MCF 10A (cell line): ENCODE measurements at regions of chr2 and their contacts with region 1.

Region 1: GRCh38 chr2:174697255-174697654 is 67.0 kb downstream of the CHRNA1 start:
- DNase-seq: peak; percentile 69
- H3K4me3 Mint-ChIP-seq: no peak overlapping the region
- H3K27ac Mint-ChIP-seq: no peak overlapping the region
- H3K4me1 Mint-ChIP-seq: peaks cover 5% of the 10 kb centered on the region
- H3K27me3 Mint-ChIP-seq: no peaks in the 10 kb centered on the region
- CTCF ChIP-seq: peak; percentile 52

Region 2: DNA sequence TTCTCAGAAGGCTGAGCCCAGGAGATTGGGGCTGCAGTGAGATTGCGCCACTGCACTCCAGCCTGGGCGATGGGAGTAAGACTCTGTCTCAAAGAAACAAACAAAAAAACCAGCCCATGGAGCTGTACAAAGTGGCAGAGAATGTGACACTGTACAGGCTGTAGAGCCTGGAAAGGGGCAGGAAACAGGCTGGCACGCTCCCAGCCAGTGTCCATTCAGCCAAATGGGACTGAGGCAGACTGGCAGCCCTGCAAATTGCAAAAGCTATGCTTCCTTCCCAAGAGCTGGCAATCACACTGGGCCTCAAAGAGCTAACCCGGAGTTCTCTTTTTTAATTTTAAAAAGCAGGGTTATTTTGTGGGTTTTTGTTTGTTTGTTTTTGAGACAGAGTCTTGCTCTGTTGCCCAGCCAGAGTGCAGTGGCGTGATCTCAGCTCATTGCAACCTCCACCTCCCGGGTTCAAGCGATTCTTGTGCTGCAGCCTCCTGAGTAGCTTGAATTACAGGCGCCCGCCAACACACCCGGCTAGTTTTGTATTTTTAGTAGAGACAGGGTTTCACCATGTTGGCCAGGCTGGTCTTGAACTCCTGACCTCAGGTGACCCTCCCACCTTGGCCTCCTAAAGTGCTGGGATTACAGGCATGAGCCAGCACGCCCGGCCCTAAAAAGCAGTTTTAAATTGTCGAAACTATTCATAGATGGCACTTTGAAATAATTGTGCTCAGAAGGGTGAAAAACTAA is 258.9 kb before region 1 on chr2:
- CTCF ChIA-PET with region 1: no interaction called
- POLR2A ChIA-PET with region 1: no interaction called
- intact Hi-C with region 1: no loop called
- DNase-seq: no peak
- H3K4me3 Mint-ChIP-seq: no peak overlapping the region
- H3K27ac Mint-ChIP-seq: no peak overlapping the region
- H3K4me1 Mint-ChIP-seq: peaks cover 6% of the 10 kb centered on the region
- H3K27me3 Mint-ChIP-seq: no peaks in the 10 kb centered on the region
- CTCF ChIP-seq: no peak

Region 3: DNA sequence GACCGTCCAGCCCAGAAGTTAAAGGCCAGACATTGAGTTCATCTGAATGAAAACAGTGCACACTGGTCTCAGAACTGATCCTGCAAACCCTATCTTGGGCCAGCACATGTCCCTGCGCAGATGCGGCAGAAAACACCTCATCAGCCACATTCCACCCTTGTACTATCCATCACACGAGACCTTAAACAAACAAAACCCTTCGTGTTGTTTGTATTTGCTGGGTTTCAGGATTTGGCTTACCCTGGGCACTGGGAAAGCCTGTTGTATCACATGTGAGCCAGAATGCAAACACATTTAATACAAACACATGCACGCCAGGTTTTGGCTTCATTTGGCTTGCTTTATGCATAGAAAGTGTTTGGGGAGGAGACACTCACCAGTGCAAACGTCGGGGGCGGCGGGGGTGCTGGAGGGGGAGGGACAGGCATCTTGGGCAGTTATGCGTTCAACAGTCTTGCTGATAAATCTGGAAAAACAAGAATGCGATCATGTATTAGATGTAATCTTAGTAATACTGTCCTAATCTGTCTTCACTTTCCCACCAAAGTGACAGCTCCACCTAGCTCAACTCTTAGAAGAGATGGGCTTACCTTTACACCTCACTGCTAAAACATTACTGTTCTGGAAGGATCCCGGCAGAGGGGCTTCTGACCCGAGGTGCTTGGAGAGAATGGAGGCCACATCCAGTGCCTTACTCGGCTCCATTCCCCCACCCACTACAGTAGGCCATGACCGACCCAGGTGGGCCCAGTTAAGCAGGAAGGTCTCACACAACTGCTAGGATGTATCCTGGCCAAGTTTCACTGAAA is 111.9 kb before region 1 on chr2:
- CTCF ChIA-PET with region 1: interaction called, 20 read pairs
- POLR2A ChIA-PET with region 1: no interaction called
- intact Hi-C with region 1: no loop called
- DNase-seq: no peak
- H3K4me3 Mint-ChIP-seq: no peak overlapping the region
- H3K27ac Mint-ChIP-seq: no peak overlapping the region
- H3K4me1 Mint-ChIP-seq: no peaks in the 10 kb centered on the region
- H3K27me3 Mint-ChIP-seq: no peaks in the 10 kb centered on the region
- CTCF ChIP-seq: no peak

Region 4: DNA sequence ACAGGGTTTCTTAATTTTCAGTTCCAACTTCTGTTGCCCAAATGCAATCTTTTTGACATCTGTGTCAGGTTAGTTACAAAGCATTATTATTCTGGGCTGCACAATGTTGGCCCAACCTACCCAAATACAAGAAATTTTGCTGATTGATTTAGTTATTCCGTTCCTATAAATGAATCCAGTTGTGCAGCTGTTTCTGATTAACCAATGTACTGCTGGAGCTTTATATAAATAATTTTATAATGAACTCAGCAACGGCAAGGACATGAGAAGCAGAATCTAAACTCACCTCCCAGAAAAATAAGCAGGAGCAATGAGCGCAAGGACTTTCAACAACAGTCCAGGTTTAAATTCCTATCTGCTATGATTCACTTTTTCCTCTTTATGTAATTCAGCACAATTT is 23.4 kb before region 1 on chr2:
- CTCF ChIA-PET with region 1: interaction called, 11 read pairs
- POLR2A ChIA-PET with region 1: no interaction called
- intact Hi-C with region 1: no loop called
- DNase-seq: no peak
- H3K4me3 Mint-ChIP-seq: no peak overlapping the region
- H3K27ac Mint-ChIP-seq: no peak overlapping the region
- H3K4me1 Mint-ChIP-seq: peaks cover 6% of the 10 kb centered on the region
- H3K27me3 Mint-ChIP-seq: no peaks in the 10 kb centered on the region
- CTCF ChIP-seq: no peak

Region 5: DNA sequence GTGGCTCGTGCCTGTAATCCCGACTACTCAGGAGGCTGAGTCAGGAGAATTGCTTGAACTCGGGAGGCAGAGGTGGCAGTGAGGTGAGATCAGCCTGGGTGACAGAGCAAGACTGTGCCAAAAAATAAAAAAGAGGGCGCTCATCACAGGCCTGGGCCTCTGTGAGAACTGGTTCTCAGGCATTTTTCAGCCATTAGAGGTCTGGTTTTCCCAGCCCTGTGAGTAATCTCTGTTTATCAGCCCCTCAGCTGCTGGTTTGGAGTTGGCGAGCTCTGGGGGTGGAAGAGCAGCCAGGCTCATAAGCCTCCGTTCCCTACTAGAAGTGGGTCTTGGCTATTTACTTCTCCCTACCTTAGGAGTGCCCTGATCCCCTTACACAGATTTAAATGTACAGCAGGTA is 14.0 kb after region 1 on chr2:
- CTCF ChIA-PET with region 1: interaction called, 32 read pairs
- POLR2A ChIA-PET with region 1: no interaction called
- intact Hi-C with region 1: no loop called
- DNase-seq: no peak
- H3K4me3 Mint-ChIP-seq: no peak overlapping the region
- H3K27ac Mint-ChIP-seq: no peak overlapping the region
- H3K4me1 Mint-ChIP-seq: no peaks in the 10 kb centered on the region
- H3K27me3 Mint-ChIP-seq: peaks cover 11% of the 10 kb centered on the region
- CTCF ChIP-seq: no peak

Region 6: DNA sequence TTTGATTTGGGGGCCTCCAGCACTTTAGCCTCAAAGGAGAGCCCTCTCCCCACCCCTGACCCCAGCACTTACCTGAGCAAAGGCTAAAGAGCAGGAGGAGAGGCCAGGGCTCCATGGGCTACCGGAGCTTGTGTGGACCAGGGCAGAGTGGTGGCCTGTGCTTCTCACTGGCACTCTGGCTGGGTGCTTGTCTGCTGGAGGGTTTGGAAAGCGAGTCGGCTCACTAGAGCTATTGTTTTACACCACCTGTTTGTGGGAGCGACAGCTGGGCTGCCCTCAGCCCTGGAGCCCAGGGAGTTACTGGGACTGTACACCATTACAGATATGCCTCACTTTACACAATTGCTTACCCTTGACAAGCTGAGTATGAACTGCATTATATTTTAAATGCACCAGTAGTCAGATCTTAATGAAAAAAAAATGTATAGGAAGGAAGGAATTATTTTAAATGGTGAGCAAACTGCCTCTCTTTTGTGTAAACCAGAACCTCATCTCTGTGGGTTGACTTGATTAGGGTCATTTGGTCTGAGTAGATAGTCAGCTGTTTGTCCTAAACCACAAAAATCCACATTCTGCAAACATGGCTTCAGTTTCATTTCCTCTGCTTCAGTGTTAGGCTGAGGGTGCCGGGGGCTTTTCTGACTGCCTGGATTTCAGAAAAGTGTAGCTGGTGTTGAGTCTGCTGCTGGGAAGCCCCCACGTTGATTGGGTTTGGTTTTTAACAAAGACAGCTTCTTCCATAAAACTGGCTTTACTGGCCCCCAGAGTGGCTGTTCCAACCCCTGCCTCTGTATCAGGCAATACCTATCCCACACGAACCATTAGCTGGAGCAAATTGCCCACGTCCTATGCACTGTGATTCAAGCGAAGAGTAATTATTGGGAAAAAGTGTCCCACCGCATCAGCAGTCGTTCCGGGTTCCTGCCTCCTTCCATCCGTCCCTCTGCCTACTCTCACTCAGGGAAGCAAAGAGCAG is 67.3 kb after region 1 on chr2 and contains the start of gene CHRNA1:
- CTCF ChIA-PET with region 1: interaction called, 13 read pairs
- POLR2A ChIA-PET with region 1: no interaction called
- intact Hi-C with region 1: no loop called
- DNase-seq: no peak
- H3K4me3 Mint-ChIP-seq: no peak within 1 kb of the TSS
- H3K27ac Mint-ChIP-seq: no peak within 1 kb of the TSS
- H3K4me1 Mint-ChIP-seq: no peaks in the 10 kb centered on the region
- H3K27me3 Mint-ChIP-seq: no peaks in the 10 kb centered on the region
- CTCF ChIP-seq: no peak
- total RNA-seq, gene CHRNA1: not detected in 2 replicates

Region 7: GRCh38 chr2:174901075-174901474 is 203.8 kb after region 1 on chr2:
- CTCF ChIA-PET with region 1: no interaction called
- POLR2A ChIA-PET with region 1: no interaction called
- intact Hi-C with region 1: no loop called
- DNase-seq: no peak
- H3K4me3 Mint-ChIP-seq: no peak overlapping the region
- H3K27ac Mint-ChIP-seq: no peak overlapping the region
- H3K4me1 Mint-ChIP-seq: no peaks in the 10 kb centered on the region
- H3K27me3 Mint-ChIP-seq: no peaks in the 10 kb centered on the region
- CTCF ChIP-seq: no peak

Region 8: GRCh38 chr2:175282290-175282689 is 585.0 kb after region 1 on chr2:
- CTCF ChIA-PET with region 1: interaction called, 3 read pairs
- POLR2A ChIA-PET with region 1: no interaction called
- intact Hi-C with region 1: loop called (anchors 2 kb)
- DNase-seq: peak; percentile 47
- H3K4me3 Mint-ChIP-seq: no peak overlapping the region
- H3K27ac Mint-ChIP-seq: no peak overlapping the region
- H3K4me1 Mint-ChIP-seq: no peaks in the 10 kb centered on the region
- H3K27me3 Mint-ChIP-seq: peaks cover 64% of the 10 kb centered on the region
- CTCF ChIP-seq: peak; percentile 46